CD8-positive, alpha-beta T cell (primary cell): ENCODE measurements at regions of chr3 and their contacts with region 1.

Region 1: DNA sequence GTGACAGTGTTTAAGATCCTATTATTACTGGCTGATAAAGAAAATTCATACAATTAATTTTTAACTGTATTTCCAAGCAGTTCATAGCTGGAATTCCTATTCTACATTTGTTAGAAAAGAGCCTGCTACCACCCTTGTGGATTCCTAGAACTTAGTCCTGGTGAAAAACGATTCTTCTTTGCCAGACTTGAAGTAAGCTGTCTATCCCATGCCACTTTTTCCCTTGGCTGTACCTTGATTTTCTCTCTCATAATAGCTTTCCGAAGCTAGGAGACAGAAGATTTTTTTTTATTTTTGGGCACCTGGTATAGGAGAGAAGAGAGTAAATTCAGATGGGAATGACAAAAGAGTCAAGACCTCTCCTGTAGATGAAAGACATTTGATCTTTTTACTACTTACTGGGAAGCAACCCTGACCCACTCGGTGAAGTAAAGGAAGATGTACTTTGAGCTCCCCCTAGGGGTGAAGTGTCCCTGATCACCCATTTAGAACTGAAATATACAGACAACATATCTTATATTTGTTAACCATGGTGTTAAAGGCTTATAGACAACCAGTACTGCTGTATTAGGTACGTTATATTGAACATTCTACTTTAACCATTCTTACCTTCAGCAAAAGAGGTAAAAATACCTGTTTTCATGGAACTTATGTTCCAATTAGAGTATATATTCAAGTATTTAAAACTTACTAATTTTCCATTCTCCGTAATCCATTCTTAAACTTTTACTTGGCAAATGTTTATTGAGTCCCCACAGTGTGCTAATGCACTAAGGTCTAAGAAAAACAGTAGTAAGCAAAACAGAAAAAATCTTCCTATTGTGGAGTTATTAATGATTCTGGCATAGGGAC is 36.2 kb upstream of the C3orf38 start:
- DNase-seq: peak; percentile 6 to 80 (median 55)
- ATAC-seq: peak; percentile 90
- H3K4me3 ChIP-seq: no peak overlapping the region
- H3K4me3 Mint-ChIP-seq: no peak overlapping the region
- H3K27ac ChIP-seq: no peak overlapping the region
- H3K27ac Mint-ChIP-seq: peak overlapping the region; percentile 28
- H3K4me1 ChIP-seq: no peaks in the 10 kb centered on the region
- H3K4me1 Mint-ChIP-seq: peaks cover 24% of the 10 kb centered on the region
- H3K27me3 ChIP-seq: no peaks in the 10 kb centered on the region
- H3K27me3 Mint-ChIP-seq: no peaks in the 10 kb centered on the region
- CTCF ChIP-seq: peak; percentile 71

Region 2: GRCh38 chr3:87298111-87298718 is 815.3 kb before region 1 on chr3:
- CTCF ChIA-PET with region 1: interaction called, 3 read pairs
- POLR2A ChIA-PET with region 1: no interaction called
- intact Hi-C with region 1: loop called (anchors 1 to 2 kb)
- DNase-seq: peak in 2 of 9 experiments; percentile 33 to 50
- ATAC-seq: peak; percentile 62
- H3K4me3 ChIP-seq: no peak overlapping the region
- H3K4me3 Mint-ChIP-seq: no peak overlapping the region
- H3K27ac ChIP-seq: no peak overlapping the region
- H3K27ac Mint-ChIP-seq: no peak overlapping the region
- H3K4me1 ChIP-seq: no peaks in the 10 kb centered on the region
- H3K4me1 Mint-ChIP-seq: peaks cover 2% of the 10 kb centered on the region
- H3K27me3 ChIP-seq: no peaks in the 10 kb centered on the region
- H3K27me3 Mint-ChIP-seq: peaks cover 2% of the 10 kb centered on the region
- CTCF ChIP-seq: peak; percentile 89

Region 3: GRCh38 chr3:87771341-87772192 is 342.0 kb before region 1 on chr3:
- CTCF ChIA-PET with region 1: interaction called, 8 read pairs
- POLR2A ChIA-PET with region 1: no interaction called
- intact Hi-C with region 1: loop called (anchors 1 kb)
- DNase-seq: peak in 7 of 9 experiments; percentile 4 to 65 (median 29)
- ATAC-seq: peak; percentile 77
- H3K4me3 ChIP-seq: no peak overlapping the region
- H3K4me3 Mint-ChIP-seq: no peak overlapping the region
- H3K27ac ChIP-seq: no peak overlapping the region
- H3K27ac Mint-ChIP-seq: no peak overlapping the region
- H3K4me1 ChIP-seq: no peaks in the 10 kb centered on the region
- H3K4me1 Mint-ChIP-seq: no peaks in the 10 kb centered on the region
- H3K27me3 ChIP-seq: no peaks in the 10 kb centered on the region
- H3K27me3 Mint-ChIP-seq: peaks cover 3% of the 10 kb centered on the region
- CTCF ChIP-seq: peak; percentile 53

Region 4: GRCh38 chr3:88003115-88003755 is 110.3 kb before region 1 on chr3:
- CTCF ChIA-PET with region 1: interaction called, 3 read pairs
- POLR2A ChIA-PET with region 1: no interaction called
- intact Hi-C with region 1: loop called (anchors 1 to 5 kb)
- DNase-seq: peak in 2 of 9 experiments; percentile 39 to 54
- ATAC-seq: no peak
- H3K4me3 ChIP-seq: no peak overlapping the region
- H3K4me3 Mint-ChIP-seq: no peak overlapping the region
- H3K27ac ChIP-seq: no peak overlapping the region
- H3K27ac Mint-ChIP-seq: no peak overlapping the region
- H3K4me1 ChIP-seq: no peaks in the 10 kb centered on the region
- H3K4me1 Mint-ChIP-seq: peaks cover 14% of the 10 kb centered on the region
- H3K27me3 ChIP-seq: no peaks in the 10 kb centered on the region
- H3K27me3 Mint-ChIP-seq: peaks cover 7% of the 10 kb centered on the region
- CTCF ChIP-seq: peak; percentile 63

Region 5: DNA sequence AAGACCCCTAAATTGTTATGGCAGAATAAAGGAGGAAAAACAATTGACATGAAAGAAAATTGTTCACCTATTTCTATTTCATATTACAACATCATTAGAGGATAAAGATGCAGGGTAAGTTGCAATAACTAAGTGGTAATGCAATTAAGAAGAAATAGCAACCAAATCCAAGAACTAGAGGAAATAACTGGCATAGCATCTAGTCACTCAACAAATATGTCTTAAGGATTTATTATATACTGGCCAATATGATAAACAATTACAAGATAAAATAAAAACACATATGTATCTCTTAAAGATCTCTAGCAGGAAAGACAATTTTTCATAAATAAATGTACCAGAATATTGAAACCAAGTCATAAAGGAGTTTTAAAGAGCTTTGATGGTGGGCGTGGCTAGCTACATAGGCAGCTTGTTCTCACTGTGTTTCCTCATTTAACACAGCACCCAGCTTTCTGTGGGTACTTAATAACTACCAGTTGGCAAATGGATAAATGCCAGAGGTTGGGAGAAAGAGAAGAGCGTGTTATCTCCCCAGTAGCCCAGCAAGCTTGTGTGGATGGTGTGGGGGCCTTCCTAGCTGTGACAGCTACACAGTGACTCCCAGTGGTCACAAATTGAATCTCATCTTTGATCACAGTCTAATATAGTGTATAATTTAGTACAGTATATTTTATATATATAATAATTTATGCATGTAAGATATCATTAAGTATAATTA is 1977.8 kb after region 1 on chr3:
- CTCF ChIA-PET with region 1: no interaction called
- POLR2A ChIA-PET with region 1: no interaction called
- intact Hi-C with region 1: no loop called
- DNase-seq: no peak
- ATAC-seq: no peak
- H3K4me3 ChIP-seq: no peak overlapping the region
- H3K4me3 Mint-ChIP-seq: no peak overlapping the region
- H3K27ac ChIP-seq: no peak overlapping the region
- H3K27ac Mint-ChIP-seq: no peak overlapping the region
- H3K4me1 ChIP-seq: no peaks in the 10 kb centered on the region
- H3K4me1 Mint-ChIP-seq: no peaks in the 10 kb centered on the region
- H3K27me3 ChIP-seq: no peaks in the 10 kb centered on the region
- H3K27me3 Mint-ChIP-seq: no peaks in the 10 kb centered on the region
- CTCF ChIP-seq: no peak